Mammary epithelial cell (primary cell): ENCODE measurements at regions of chr2 and their contacts with region 1.

Region 1: DNA sequence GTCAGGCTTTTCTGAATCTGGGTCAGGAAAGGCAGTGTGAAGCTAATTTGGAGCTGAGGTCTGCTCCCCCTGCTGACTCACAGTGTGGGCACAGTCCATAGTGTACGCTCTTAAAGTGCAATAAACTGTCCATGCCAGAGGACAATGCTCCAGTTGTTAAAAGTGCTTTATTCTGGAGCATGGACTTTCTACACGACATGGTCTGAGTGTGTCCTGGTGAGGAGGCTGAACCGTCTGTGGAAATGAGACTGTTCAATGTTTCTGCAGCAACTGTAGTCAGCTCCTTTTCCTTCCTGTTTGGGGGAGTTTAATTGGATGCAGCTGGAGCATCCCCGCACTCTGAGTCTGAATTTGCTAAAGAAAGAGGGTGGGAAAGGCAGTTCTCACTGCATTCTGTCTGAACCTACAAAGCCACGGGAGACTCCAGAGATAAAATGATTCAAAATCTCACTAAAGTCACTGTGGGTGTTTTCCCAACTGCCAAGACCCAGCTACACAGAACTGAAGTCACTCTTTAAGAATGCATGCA is 110.2 kb upstream of the TRIB2 start:
- DNase-seq: peak; percentile 54
- H3K4me3 ChIP-seq: no peak overlapping the region
- H3K27ac ChIP-seq: no peak overlapping the region
- H3K4me1 ChIP-seq: peaks cover 6% of the 10 kb centered on the region
- H3K27me3 ChIP-seq: no peaks in the 10 kb centered on the region
- CTCF ChIP-seq: peak; percentile 18 to 21

Region 2: GRCh38 chr2:12416600-12416999 is 189.9 kb before region 1 on chr2:
- CTCF ChIA-PET with region 1: no interaction called
- dilution Hi-C with region 1: no loop called
- in situ Hi-C with region 1: no loop called
- intact Hi-C with region 1: no loop called
- DNase-seq: no peak
- H3K4me3 ChIP-seq: no peak overlapping the region
- H3K27ac ChIP-seq: no peak overlapping the region
- H3K4me1 ChIP-seq: no peaks in the 10 kb centered on the region
- H3K27me3 ChIP-seq: peaks cover 2% of the 10 kb centered on the region
- CTCF ChIP-seq: peak; percentile 38 to 50

Region 3: GRCh38 chr2:12507295-12507694 is 99.2 kb before region 1 on chr2:
- CTCF ChIA-PET with region 1: no interaction called
- dilution Hi-C with region 1: loop called (anchors 5 kb)
- in situ Hi-C with region 1: no loop called
- intact Hi-C with region 1: no loop called
- DNase-seq: peak; percentile 99
- H3K4me3 ChIP-seq: no peak overlapping the region
- H3K27ac ChIP-seq: no peak overlapping the region
- H3K4me1 ChIP-seq: peaks cover 34% of the 10 kb centered on the region
- H3K27me3 ChIP-seq: no peaks in the 10 kb centered on the region
- CTCF ChIP-seq: no peak

Region 4: DNA sequence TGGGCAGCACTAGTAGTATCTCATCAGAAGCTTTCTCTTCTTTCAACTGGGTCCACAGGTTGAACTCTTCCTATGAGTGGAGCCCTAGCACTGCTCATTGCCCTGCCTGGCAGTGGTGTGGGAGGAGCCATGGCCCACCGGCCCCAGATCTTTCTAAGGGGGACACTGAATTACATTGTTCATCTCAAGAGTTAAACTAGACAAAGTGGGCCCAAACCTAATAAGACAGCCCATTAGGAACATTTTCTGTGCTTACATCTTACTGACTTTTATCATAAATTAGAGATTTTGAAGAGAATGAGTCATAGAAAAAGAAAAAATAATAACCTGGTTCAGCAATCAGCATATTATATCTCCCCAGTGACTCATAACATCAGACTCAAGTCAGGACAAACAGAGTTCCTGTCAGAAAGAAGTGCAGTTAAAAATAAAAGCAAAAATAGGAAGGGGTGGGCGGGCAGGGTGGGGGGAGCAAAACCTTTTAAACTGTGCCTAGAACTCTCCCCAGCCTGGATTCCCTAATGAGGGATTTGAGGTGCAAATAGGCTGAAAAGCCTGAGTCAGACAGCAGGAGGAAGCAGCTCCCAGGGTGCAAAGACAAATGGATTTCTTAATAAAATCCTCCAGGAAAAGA is 51.4 kb before region 1 on chr2:
- CTCF ChIA-PET with region 1: no interaction called
- dilution Hi-C with region 1: loop called (anchors 10 kb)
- in situ Hi-C with region 1: no loop called
- intact Hi-C with region 1: no loop called
- DNase-seq: peak; percentile 63
- H3K4me3 ChIP-seq: no peak overlapping the region
- H3K27ac ChIP-seq: peak overlapping the region; percentile 3
- H3K4me1 ChIP-seq: peaks cover 24% of the 10 kb centered on the region
- H3K27me3 ChIP-seq: no peaks in the 10 kb centered on the region
- CTCF ChIP-seq: peak in 1 of 2 donors; percentile 26

Region 5: DNA sequence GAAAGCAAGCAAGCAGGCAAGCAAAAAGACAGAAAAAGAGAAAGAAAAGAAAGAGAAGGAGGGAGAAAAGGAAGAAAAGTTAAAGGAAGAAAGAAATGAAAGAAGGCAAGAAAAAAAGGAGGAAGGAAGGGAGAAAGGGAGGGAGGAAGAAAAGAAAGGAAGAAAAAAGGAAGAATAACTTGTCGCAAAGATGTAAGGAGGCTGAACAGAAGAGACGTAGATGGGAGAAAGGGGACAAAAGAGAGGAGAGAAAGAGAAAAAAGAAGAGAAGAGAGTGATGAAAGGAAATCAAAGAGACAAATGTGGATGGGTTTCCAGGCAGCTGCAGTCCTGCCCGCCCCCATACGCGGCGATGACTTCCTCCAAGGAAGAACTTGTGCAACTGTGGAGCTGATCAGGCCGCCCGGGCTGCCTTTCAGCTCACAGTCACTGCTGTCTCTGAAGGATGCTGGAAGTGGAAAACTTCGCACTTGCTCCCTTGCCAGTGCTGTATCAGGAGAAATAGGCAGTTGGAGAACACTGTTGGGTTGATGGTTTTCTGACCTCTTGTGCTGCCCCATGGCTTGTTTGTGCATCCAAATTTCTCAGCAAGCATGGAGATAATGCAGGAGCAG is 163.1 kb after region 1 on chr2:
- CTCF ChIA-PET with region 1: no interaction called
- dilution Hi-C with region 1: no loop called
- in situ Hi-C with region 1: no loop called
- intact Hi-C with region 1: no loop called
- DNase-seq: no peak
- H3K4me3 ChIP-seq: no peak overlapping the region
- H3K27ac ChIP-seq: no peak overlapping the region
- H3K4me1 ChIP-seq: peaks cover 21% of the 10 kb centered on the region
- H3K27me3 ChIP-seq: no peaks in the 10 kb centered on the region
- CTCF ChIP-seq: no peak

Region 6: GRCh38 chr2:12965540-12966269 is 359.2 kb after region 1 on chr2:
- CTCF ChIA-PET with region 1: no interaction called
- dilution Hi-C with region 1: no loop called
- in situ Hi-C with region 1: no loop called
- intact Hi-C with region 1: no loop called
- DNase-seq: peak; percentile 57
- H3K4me3 ChIP-seq: no peak overlapping the region
- H3K27ac ChIP-seq: no peak overlapping the region
- H3K4me1 ChIP-seq: peaks cover 14% of the 10 kb centered on the region
- H3K27me3 ChIP-seq: no peaks in the 10 kb centered on the region
- CTCF ChIP-seq: no peak